Gastrocnemius medialis (tissue), 4 donors: ENCODE measurements at regions of chr1 and their contacts with region 1.

Region 1: GRCh38 chr1:204398217-204399081 is 13.2 kb downstream of the PPP1R15B start:
- DNase-seq: peak; percentile 57 to 70
- ATAC-seq: peak; percentile 91 to 93
- H3K4me3 ChIP-seq: no peak overlapping the region
- H3K27ac ChIP-seq: peak overlapping the region; percentile 17 to 68 (median 34)
- H3K4me1 ChIP-seq: peaks cover 0 to 3% of the 10 kb centered on the region in 2 donors
- H3K27me3 ChIP-seq: no peaks in the 10 kb centered on the region
- CTCF ChIP-seq: peak; percentile 61 to 80 (median 77)
- POLR2A ChIP-seq: no peak

Region 2: DNA sequence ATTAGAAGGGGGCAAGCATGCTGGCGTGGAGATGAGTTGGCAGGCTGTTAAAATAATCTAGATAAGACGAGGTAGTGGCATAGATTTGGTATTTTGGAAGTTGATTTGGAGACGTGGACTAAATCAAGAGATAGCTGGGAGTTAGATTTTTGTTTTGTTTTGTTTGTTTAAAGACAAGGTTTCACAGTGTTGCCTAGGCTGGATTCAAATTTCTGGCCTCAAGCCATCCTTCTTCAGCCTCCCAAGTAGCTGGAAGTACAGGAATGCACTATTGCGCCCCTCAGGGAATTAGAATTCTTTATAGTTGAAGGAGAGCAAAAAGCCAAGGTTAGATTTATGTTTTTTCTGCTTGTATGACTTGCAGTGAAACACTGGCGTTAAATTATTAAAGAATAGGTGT is 559.4 kb before region 1 on chr1:
- in situ Hi-C with region 1: loop called in 1 of 4 experiments (anchors 25 kb)
- intact Hi-C with region 1: no loop called
- DNase-seq: no peak
- ATAC-seq: no peak
- H3K4me3 ChIP-seq: no peak overlapping the region
- H3K27ac ChIP-seq: no peak overlapping the region
- H3K4me1 ChIP-seq: no peaks in the 10 kb centered on the region
- H3K27me3 ChIP-seq: no peaks in the 10 kb centered on the region
- CTCF ChIP-seq: no peak
- POLR2A ChIP-seq: no peak

Region 3: GRCh38 chr1:204377795-204378608 is 20.4 kb before region 1 on chr1:
- in situ Hi-C with region 1: no loop called
- intact Hi-C with region 1: loop called (anchors 2 kb)
- DNase-seq: peak in 1 of 2 donors; percentile 10
- ATAC-seq: peak; percentile 43 to 68
- H3K4me3 ChIP-seq: peak overlapping the region; percentile 52 to 80 (median 60)
- H3K27ac ChIP-seq: peak overlapping the region in 3 of 4 donors; percentile 30 to 65 (median 63)
- H3K4me1 ChIP-seq: peaks cover 7 to 23% of the 10 kb centered on the region in 2 donors
- H3K27me3 ChIP-seq: peaks cover 10 to 15% (median 12%) of the 10 kb centered on the region in 3 donors
- CTCF ChIP-seq: no peak
- POLR2A ChIP-seq: peak in 1 of 2 donors; percentile 8